Lower leg skin (tissue), 4 donors: ENCODE measurements at regions of chr4 and their contacts with region 1.

Region 1: GRCh38 chr4:130855533-130855932 is 1759.6 kb downstream of the C4orf33 start:
- DNase-seq: no peak
- H3K4me3 ChIP-seq: no peak overlapping the region
- CTCF ChIP-seq: no peak
- POLR2A ChIP-seq: no peak

Region 2: DNA sequence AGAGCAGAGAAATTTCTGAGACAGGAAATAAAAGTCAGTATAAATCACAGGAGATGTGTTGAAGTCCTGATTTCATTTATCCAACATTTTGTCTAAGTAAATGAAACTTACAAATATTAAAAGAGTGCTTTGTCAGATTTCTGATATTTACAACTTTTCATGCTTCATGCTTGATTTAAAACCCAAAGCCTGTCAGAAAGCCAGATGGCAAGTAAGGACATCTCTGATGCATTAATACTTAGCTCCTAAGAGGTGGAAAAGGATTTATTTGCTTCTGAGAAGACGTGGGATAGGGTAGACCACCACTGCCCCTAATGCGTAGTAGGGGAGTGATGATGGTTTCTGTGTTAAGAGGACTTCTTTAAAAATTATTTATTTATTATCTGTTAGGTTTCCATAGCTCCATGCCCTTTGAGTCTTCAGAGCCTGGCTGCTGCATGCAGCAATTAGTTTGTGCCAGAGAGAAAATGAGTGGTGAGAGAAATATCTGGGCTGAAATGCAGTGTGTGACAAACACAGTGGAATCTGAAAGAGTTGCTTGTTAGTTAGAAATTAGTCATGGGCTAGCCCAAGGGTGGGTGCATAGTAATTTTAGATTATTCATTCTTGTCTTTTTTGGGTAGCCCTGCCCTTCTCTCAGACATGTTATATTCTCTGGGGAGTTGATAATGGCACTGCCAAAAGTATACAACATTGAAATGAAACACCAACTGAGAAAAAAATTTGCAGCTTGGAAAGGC is 1425.8 kb before region 1 on chr4:
- intact Hi-C with region 1: loop called (anchors 5 kb)
- DNase-seq: no peak
- H3K4me3 ChIP-seq: no peak overlapping the region
- CTCF ChIP-seq: no peak
- POLR2A ChIP-seq: no peak